Activated CD4-positive, alpha-beta T cell treated with anti-CD3 and anti-CD28 coated beads for 36 hours (primary cell): ENCODE measurements at regions of chr5 and their contacts with region 1.

Region 1: DNA sequence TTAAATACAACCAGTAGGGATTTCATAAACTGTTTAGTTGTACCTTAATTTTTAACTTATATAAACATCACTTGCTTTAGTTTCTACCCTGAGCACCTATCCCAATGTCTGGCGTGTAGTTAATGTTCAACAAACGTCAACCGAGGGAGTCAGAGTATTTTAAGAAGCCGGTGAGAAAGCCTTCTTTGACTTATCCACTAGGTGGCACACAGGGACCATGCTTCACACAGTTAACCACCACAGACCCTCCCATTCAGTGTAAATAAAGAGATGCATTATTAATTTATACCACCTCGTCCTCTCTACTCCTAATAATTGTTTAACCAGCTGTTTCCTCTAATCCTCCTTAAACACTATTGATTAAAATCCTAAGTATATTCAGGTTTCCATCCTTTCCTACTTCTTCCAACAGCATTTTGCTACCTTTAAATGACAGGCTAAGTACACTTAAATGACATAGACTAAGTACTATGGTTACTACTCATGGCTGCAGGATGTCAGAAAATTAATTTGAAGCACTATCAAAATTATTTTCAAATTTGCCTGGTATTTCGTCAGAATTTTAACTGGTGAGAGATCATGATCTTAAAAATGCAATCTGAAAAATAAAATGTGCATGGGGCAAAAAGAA is 2.3 kb downstream of the HAPLN1 start:
- DNase-seq: peak; percentile 46
- ATAC-seq: no peak
- H3K4me3 Mint-ChIP-seq: no peak overlapping the region
- H3K27ac Mint-ChIP-seq: no peak overlapping the region
- H3K4me1 Mint-ChIP-seq: peaks cover 5% of the 10 kb centered on the region
- H3K27me3 Mint-ChIP-seq: peaks cover 46% of the 10 kb centered on the region

Region 2: DNA sequence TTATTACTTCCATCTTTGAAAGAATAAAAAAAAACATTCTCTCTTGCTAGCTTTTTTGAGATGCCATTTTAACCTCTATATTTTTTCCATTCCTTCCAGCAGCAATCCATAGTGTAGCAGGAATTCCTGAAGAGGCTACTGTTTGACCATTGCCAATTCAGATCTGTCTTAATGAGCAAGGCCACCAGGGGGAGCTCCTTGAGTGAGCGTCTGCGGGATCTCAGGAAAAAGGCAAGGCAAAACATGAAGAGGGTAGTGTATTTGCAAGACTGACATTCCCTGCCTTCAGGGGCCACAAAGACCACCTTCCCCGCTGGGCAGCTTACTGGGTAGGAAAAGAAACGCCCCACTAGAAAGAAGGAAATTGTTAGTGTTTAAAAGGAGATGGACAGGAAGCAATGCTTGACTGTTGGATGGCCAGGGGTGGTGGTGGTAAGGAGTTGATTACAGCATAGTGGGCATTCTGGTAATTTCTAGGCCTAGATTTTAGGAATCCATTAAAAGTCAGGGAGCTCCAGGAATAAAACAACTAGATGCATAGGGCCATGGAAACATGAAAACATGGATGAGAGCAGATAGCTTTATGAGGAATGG is 208.9 kb after region 1 on chr5:
- CTCF ChIA-PET with region 1: no interaction called
- POLR2A ChIA-PET with region 1: no interaction called
- intact Hi-C with region 1: loop called in 1 of 2 experiments (anchors 5 kb)
- DNase-seq: peak; percentile 56
- ATAC-seq: no peak
- H3K4me3 Mint-ChIP-seq: no peak overlapping the region
- H3K27ac Mint-ChIP-seq: no peak overlapping the region
- H3K4me1 Mint-ChIP-seq: no peaks in the 10 kb centered on the region
- H3K27me3 Mint-ChIP-seq: peaks cover 3% of the 10 kb centered on the region

Region 3: GRCh38 chr5:84255315-84255714 is 537.0 kb after region 1 on chr5:
- CTCF ChIA-PET with region 1: no interaction called
- POLR2A ChIA-PET with region 1: no interaction called
- intact Hi-C with region 1: loop called in 1 of 2 experiments (anchors 10 kb)
- DNase-seq: no peak
- ATAC-seq: no peak
- H3K4me3 Mint-ChIP-seq: no peak overlapping the region
- H3K27ac Mint-ChIP-seq: no peak overlapping the region
- H3K4me1 Mint-ChIP-seq: no peaks in the 10 kb centered on the region
- H3K27me3 Mint-ChIP-seq: no peaks in the 10 kb centered on the region

Region 4: DNA sequence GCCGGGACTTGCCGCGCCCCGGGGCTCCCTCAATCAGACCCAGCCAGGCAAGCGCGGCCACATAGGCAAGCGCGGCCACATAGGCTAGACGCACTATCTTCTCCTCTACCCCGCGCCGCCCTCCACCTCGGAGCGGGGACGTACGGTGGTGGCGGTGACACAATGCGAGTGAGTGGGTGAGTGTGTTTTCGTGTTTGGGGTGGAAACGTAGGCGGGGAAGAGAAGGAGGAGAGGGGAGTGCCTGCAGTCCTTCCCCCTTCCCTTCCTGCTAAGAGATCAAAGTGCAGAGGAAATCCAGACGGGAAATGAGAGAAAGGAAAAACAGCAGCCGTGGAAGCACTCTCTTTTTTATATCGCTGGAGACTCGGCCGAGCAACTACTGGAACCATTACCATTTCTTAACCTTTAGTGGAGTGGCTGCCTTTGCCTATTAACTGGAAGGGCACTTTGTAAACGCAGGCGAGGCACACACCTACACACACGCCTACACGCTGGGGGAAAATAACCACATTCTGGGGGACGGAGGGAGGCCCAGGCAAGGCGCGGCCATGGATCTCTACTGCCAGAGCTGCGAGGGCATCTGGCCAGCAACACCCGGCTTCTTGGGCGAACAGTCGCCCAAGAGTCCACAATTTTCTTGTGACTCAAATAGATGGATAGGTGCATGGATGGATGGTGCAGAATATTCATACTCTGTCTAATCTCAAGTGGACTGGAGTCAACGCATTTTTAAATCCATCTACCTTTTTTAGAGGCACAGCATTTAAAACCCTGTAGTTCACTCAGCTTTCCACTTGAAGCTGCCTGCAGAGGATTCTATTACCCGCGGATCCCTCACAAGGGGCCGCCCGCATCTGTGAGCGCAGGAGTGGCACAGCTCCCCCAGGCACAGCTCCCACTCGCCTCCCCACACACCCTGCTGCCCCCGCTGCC is 664.3 kb after region 1 on chr5:
- CTCF ChIA-PET with region 1: no interaction called
- POLR2A ChIA-PET with region 1: no interaction called
- intact Hi-C with region 1: loop called in 1 of 2 experiments (anchors 10 kb)
- DNase-seq: peak; percentile 18
- ATAC-seq: peak; percentile 30
- H3K4me3 Mint-ChIP-seq: no peak overlapping the region
- H3K27ac Mint-ChIP-seq: no peak overlapping the region
- H3K4me1 Mint-ChIP-seq: peaks cover 6% of the 10 kb centered on the region
- H3K27me3 Mint-ChIP-seq: peaks cover 35% of the 10 kb centered on the region

Region 5: GRCh38 chr5:85049020-85049419 is 1330.7 kb after region 1 on chr5:
- CTCF ChIA-PET with region 1: no interaction called
- POLR2A ChIA-PET with region 1: no interaction called
- intact Hi-C with region 1: loop called in 1 of 2 experiments (anchors 10 kb)
- DNase-seq: no peak
- ATAC-seq: no peak
- H3K4me3 Mint-ChIP-seq: no peak overlapping the region
- H3K27ac Mint-ChIP-seq: no peak overlapping the region
- H3K4me1 Mint-ChIP-seq: no peaks in the 10 kb centered on the region
- H3K27me3 Mint-ChIP-seq: no peaks in the 10 kb centered on the region